Esophagus muscularis mucosa (tissue), 4 donors: ENCODE measurements at regions of chr6 and their contacts with region 1.

Region 1: GRCh38 chr6:17281100-17281494 is at the start of gene RBM24:
- DNase-seq: no peak
- H3K4me3 ChIP-seq: peak within 1 kb of the TSS; percentile 76 to 93 (median 90)
- H3K27ac ChIP-seq: peak within 1 kb of the TSS; percentile 96 to 99 (median 96)
- H3K4me1 ChIP-seq: peaks cover 10 to 78% (median 65%) of the 10 kb centered on the region in 4 donors
- H3K27me3 ChIP-seq: no peaks in the 10 kb centered on the region
- CTCF ChIP-seq: peak in 1 of 3 experiments; percentile 38
- EP300 ChIP-seq: no peak
- POLR2A ChIP-seq: peak; percentile 8
- total RNA-seq, gene RBM24: 10.9 to 25.5 (median 20.9) TPM

Region 2: DNA sequence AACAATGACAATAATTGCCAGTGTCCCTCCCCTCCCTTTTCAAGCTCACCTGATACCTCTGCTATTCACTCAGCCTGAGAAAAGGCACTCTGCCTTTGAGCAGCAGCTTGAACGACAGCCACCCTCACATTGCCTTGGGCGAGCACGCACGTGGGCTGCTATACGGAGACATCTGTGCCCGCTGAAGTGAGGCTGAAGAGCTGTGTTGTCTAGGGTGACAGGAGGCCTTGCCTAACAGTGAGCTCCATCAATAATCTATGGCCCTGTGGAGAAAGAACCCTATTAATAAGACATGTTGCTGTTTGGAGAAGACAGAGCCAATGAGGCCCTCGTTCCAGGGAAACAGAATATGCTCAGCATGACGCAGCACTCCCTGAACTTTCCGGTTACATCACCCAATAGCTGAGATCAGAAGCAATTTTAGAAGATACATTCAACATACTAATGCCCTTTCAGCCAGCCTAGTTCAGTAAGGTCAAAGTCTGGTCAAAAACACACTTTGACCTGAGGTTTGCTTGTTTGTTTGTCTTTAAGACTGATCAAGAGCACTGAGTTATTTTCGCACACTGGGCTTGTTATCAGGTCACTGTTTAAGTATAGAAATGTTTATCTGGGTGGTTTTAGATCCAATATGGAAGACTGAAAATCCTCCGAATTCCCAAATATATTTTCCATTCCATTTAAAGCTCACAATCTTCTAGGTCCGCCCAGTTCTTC is 30.7 kb after region 1 on chr6:
- intact Hi-C with region 1: no loop called
- DNase-seq: no peak
- H3K4me3 ChIP-seq: no peak overlapping the region
- H3K27ac ChIP-seq: no peak overlapping the region
- H3K4me1 ChIP-seq: no peaks in the 10 kb centered on the region
- H3K27me3 ChIP-seq: no peaks in the 10 kb centered on the region
- CTCF ChIP-seq: no peak
- EP300 ChIP-seq: no peak
- POLR2A ChIP-seq: no peak

Region 3: DNA sequence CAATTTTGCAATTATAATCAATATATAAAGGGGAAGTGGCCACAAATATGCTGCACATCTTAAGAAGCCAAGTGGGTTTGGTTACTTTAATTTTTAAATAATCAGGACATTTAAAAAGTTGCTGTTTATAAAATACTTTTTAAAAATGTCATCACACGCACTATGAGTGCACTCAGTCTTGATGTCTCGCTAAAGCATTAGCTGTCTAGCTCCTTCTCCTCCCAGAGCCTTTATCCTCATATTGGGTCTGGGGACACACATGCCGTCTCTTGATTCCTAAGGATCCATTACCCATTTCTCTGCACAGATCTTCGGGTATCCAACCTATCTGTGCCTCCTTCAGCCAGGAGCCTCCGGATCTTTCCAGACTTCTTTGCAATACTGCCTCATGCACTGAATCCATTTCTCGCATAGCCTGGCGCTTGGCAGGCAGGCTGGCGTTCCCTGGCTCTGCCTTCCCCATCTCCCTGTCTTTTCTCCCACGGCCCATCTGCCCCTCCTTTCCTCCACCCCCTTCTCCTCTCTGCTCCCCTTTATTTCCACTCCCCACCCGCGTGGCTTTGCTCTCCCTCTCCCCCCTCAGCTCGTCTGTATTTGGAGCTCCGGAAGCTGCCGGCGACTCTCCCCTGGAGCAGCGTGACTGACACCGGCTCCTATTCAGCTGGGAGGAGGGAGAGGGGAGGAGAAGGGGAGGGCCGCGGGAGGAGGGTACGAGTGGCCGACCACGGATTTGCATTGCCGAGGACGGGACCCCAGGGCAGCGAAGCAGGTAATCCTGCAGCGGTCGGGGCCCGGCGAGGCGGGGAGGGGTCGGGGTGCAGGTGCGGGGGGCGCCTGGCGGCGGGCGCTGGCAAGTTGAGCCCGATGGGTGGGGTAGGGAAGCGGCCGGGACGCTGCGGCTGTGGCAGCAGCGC is 112.1 kb after region 1 on chr6 and contains the start of gene CAP2:
- intact Hi-C with region 1: loop called (anchors 5 kb)
- DNase-seq: no peak
- H3K4me3 ChIP-seq: peak within 1 kb of the TSS; percentile 80 to 98 (median 88)
- H3K27ac ChIP-seq: peak within 1 kb of the TSS; percentile 92 to 96 (median 94)
- H3K4me1 ChIP-seq: peaks cover 0 to 43% (median 29%) of the 10 kb centered on the region in 4 donors
- H3K27me3 ChIP-seq: no peaks in the 10 kb centered on the region
- CTCF ChIP-seq: peak in 1 of 3 experiments; percentile 12
- EP300 ChIP-seq: no peak
- POLR2A ChIP-seq: peak; percentile 47
- total RNA-seq, gene CAP2: 38.3 to 55.6 (median 55.1) TPM

Region 4: GRCh38 chr6:17469006-17469832 is 188.1 kb after region 1 on chr6:
- intact Hi-C with region 1: loop called (anchors 5 kb)
- DNase-seq: no peak
- H3K4me3 ChIP-seq: peak overlapping the region in 2 of 4 donors; percentile 4 to 24
- H3K27ac ChIP-seq: peak overlapping the region; percentile 84 to 85 (median 84)
- H3K4me1 ChIP-seq: peaks cover 26 to 57% (median 55%) of the 10 kb centered on the region in 4 donors
- H3K27me3 ChIP-seq: no peaks in the 10 kb centered on the region
- CTCF ChIP-seq: peak; percentile 54 to 70 (median 67)
- EP300 ChIP-seq: no peak
- POLR2A ChIP-seq: no peak